CD8-positive, alpha-beta T cell (primary cell): ENCODE measurements at regions of chr16 and their contacts with region 1.

Region 1: GRCh38 chr16:71484006-71484893 is 4.9 kb downstream of the ZNF19 start:
- DNase-seq: peak; percentile 56 to 96 (median 80)
- ATAC-seq: peak; percentile 85
- H3K4me3 ChIP-seq: peak overlapping the region; percentile 84 to 94
- H3K4me3 Mint-ChIP-seq: peak overlapping the region; percentile 86
- H3K27ac ChIP-seq: peak overlapping the region; percentile 99
- H3K27ac Mint-ChIP-seq: peak overlapping the region; percentile 94
- H3K4me1 ChIP-seq: peaks cover 13% of the 10 kb centered on the region
- H3K4me1 Mint-ChIP-seq: peaks cover 16% of the 10 kb centered on the region
- H3K27me3 ChIP-seq: no peaks in the 10 kb centered on the region
- H3K27me3 Mint-ChIP-seq: peaks cover 3% of the 10 kb centered on the region
- CTCF ChIP-seq: no peak

Region 2: DNA sequence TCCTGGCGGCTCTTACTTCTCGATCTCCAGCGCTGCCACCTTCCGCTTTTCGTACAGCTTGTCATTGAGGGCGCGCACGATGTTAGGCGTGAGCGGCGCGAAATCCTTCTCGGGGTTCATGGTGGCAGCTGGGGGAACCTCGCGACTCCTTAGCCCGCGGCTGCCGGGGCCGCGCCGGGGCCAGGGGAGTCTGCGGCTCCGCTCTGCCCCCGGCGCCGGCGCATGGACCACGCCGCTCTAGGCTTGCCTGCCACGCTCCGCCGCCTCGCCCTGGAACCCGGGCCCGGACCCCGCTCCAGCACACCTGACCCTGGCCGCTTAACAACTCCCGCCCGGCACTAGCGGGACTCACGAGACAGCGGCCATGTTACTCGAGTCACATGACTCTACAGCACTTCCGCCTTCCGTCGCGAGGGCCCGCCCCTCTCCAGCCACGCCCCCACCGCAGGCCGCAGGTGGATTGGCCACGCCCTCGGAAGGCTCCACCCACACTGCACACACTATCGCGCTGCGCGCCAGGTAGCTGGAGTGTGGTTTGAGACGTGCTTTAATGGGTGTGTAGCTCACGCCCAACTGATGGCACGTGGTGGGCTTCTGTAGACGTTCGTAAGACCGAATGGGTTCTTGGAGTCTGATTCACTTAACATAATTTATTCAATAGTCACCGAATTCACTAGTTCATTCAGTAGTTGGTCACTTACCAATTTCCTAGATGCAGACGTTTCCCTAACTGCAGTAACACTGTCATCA is 683.3 kb before region 1 on chr16 and contains the start of gene VAC14:
- CTCF ChIA-PET with region 1: no interaction called
- POLR2A ChIA-PET with region 1: no interaction called
- intact Hi-C with region 1: loop called in 1 of 2 experiments (anchors 5 kb)
- DNase-seq: peak; percentile 95 to 99 (median 97)
- ATAC-seq: peak; percentile 99
- H3K4me3 ChIP-seq: peak within 1 kb of the TSS; percentile 63 to 65
- H3K4me3 Mint-ChIP-seq: peak within 1 kb of the TSS; percentile 95
- H3K27ac ChIP-seq: peak within 1 kb of the TSS; percentile 52 to 57
- H3K27ac Mint-ChIP-seq: peak within 1 kb of the TSS; percentile 97
- H3K4me1 ChIP-seq: peaks cover 12% of the 10 kb centered on the region
- H3K4me1 Mint-ChIP-seq: peaks cover 39% of the 10 kb centered on the region
- H3K27me3 ChIP-seq: no peaks in the 10 kb centered on the region
- H3K27me3 Mint-ChIP-seq: no peaks in the 10 kb centered on the region
- CTCF ChIP-seq: no peak
- total RNA-seq, gene VAC14: 27.1 to 27.2 TPM

Region 3: GRCh38 chr16:71412270-71413160 is 71.7 kb before region 1 on chr16:
- CTCF ChIA-PET with region 1: interaction called, 32 read pairs
- POLR2A ChIA-PET with region 1: no interaction called
- intact Hi-C with region 1: no loop called
- DNase-seq: peak; percentile 30 to 80 (median 69)
- ATAC-seq: peak; percentile 65
- H3K4me3 ChIP-seq: no peak overlapping the region
- H3K4me3 Mint-ChIP-seq: no peak overlapping the region
- H3K27ac ChIP-seq: no peak overlapping the region
- H3K27ac Mint-ChIP-seq: no peak overlapping the region
- H3K4me1 ChIP-seq: peaks cover 6% of the 10 kb centered on the region
- H3K4me1 Mint-ChIP-seq: peaks cover 11% of the 10 kb centered on the region
- H3K27me3 ChIP-seq: no peaks in the 10 kb centered on the region
- H3K27me3 Mint-ChIP-seq: peaks cover 14% of the 10 kb centered on the region
- CTCF ChIP-seq: peak; percentile 82

Region 4: GRCh38 chr16:71461686-71462648 is 22.3 kb before region 1 on chr16 and contains the start of gene ZNF23:
- CTCF ChIA-PET with region 1: interaction called, 13 read pairs
- POLR2A ChIA-PET with region 1: interaction called, 10 read pairs
- intact Hi-C with region 1: loop called (anchors 1 kb)
- DNase-seq: peak; percentile 55 to 88 (median 79)
- ATAC-seq: peak; percentile 95
- H3K4me3 ChIP-seq: peak within 1 kb of the TSS; percentile 96 to 100
- H3K4me3 Mint-ChIP-seq: peak within 1 kb of the TSS; percentile 96
- H3K27ac ChIP-seq: peak within 1 kb of the TSS; percentile 92 to 93
- H3K27ac Mint-ChIP-seq: peak within 1 kb of the TSS; percentile 96
- H3K4me1 ChIP-seq: peaks cover 19% of the 10 kb centered on the region
- H3K4me1 Mint-ChIP-seq: peaks cover 32% of the 10 kb centered on the region
- H3K27me3 ChIP-seq: no peaks in the 10 kb centered on the region
- H3K27me3 Mint-ChIP-seq: no peaks in the 10 kb centered on the region
- CTCF ChIP-seq: peak; percentile 29
- total RNA-seq, gene ZNF23: 8.0 to 8.5 TPM

Region 5: GRCh38 chr16:71693164-71693563 is 208.9 kb after region 1 on chr16:
- CTCF ChIA-PET with region 1: no interaction called
- POLR2A ChIA-PET with region 1: no interaction called
- intact Hi-C with region 1: no loop called
- DNase-seq: no peak
- ATAC-seq: no peak
- H3K4me3 ChIP-seq: no peak overlapping the region
- H3K4me3 Mint-ChIP-seq: no peak overlapping the region
- H3K27ac ChIP-seq: no peak overlapping the region
- H3K27ac Mint-ChIP-seq: no peak overlapping the region
- H3K4me1 ChIP-seq: no peaks in the 10 kb centered on the region
- H3K4me1 Mint-ChIP-seq: no peaks in the 10 kb centered on the region
- H3K27me3 ChIP-seq: no peaks in the 10 kb centered on the region
- H3K27me3 Mint-ChIP-seq: no peaks in the 10 kb centered on the region
- CTCF ChIP-seq: no peak

Region 6: GRCh38 chr16:71723537-71724319 is 239.5 kb after region 1 on chr16:
- CTCF ChIA-PET with region 1: no interaction called
- POLR2A ChIA-PET with region 1: no interaction called
- intact Hi-C with region 1: loop called in 1 of 2 experiments (anchors 1 kb)
- DNase-seq: peak; percentile 61 to 90 (median 79)
- ATAC-seq: peak; percentile 82
- H3K4me3 ChIP-seq: peak overlapping the region; percentile 48 to 73
- H3K4me3 Mint-ChIP-seq: peak overlapping the region; percentile 79
- H3K27ac ChIP-seq: peak overlapping the region in 1 of 2 experiments; percentile 69
- H3K27ac Mint-ChIP-seq: peak overlapping the region; percentile 67
- H3K4me1 ChIP-seq: peaks cover 14% of the 10 kb centered on the region
- H3K4me1 Mint-ChIP-seq: peaks cover 15% of the 10 kb centered on the region
- H3K27me3 ChIP-seq: no peaks in the 10 kb centered on the region
- H3K27me3 Mint-ChIP-seq: no peaks in the 10 kb centered on the region
- CTCF ChIP-seq: no peak

Region 7: DNA sequence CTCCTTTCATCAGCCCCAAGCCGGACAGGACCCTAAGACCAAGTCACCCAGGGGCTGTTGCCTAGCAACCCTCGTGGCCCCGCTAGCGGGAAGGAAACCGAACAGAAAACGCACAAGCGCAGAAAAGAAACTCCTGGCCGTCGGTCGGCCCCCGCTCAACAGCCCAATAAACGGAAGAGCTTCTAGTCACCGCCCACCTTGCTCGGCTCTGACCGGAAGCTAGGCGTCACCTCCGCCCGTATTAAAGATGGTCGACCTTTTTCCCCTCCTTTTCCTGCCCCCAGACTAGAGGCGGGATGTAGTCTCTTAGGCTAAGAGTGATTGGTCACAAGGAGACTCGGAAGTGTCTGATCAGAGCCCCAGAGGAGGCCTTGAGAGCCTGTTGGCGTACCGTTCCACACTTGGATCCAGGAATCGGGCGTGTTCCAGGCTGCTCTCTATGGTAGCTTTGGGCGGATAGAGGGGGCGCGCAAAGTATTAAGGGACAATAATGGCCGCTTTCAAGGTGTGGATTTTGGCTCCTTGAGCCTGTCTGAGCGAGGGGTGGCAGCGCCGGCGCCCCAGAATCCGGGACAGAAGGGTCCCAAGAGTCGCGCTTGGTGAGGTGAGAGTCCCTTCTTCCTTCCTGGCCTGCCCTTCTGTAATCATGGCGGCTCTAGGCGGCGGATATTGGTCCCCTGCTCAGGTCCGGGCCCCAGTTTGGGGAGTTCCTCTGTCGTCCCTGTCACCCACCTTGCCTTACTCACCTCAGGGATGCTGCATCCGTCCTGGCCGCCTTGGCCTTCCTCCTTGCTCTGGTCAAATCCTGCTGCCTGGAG is 609.4 kb after region 1 on chr16 and contains the starts of genes DHX38 and TXNL4B:
- CTCF ChIA-PET with region 1: no interaction called
- POLR2A ChIA-PET with region 1: no interaction called
- intact Hi-C with region 1: loop called in 1 of 2 experiments (anchors 10 kb)
- DNase-seq: peak; percentile 83 to 98 (median 91)
- ATAC-seq: peak; percentile 95
- H3K4me3 ChIP-seq: peak within 1 kb of the TSS; percentile 89 to 97
- H3K4me3 Mint-ChIP-seq: peak within 1 kb of the TSS; percentile 98
- H3K27ac ChIP-seq: peak within 1 kb of the TSS; percentile 87 to 98
- H3K27ac Mint-ChIP-seq: peak within 1 kb of the TSS; percentile 98
- H3K4me1 ChIP-seq: peaks cover 32% of the 10 kb centered on the region
- H3K4me1 Mint-ChIP-seq: peaks cover 46% of the 10 kb centered on the region
- H3K27me3 ChIP-seq: no peaks in the 10 kb centered on the region
- H3K27me3 Mint-ChIP-seq: no peaks in the 10 kb centered on the region
- CTCF ChIP-seq: no peak
- total RNA-seq, gene DHX38: 122 to 126 TPM
- total RNA-seq, gene TXNL4B: 16.7 to 18.3 TPM